Heart right ventricle (tissue), 16 donors: ENCODE measurements at regions of chr2 and their contacts with region 1.

Region 1: GRCh38 chr2:190679813-190680591 is 31.1 kb downstream of the NAB1 start:
- DNase-seq: peak in 1 of 2 donors; percentile 38
- ATAC-seq: peak in 6 of 8 donors; percentile 38 to 74 (median 56)
- H3K4me3 ChIP-seq: no peak overlapping the region
- H3K27ac ChIP-seq: no peak overlapping the region
- H3K4me1 ChIP-seq: peaks cover 0 to 96% (median 25%) of the 10 kb centered on the region in 9 donors
- H3K27me3 ChIP-seq: no peaks in the 10 kb centered on the region
- CTCF ChIP-seq: peak; percentile 15 to 64 (median 51)

Region 2: DNA sequence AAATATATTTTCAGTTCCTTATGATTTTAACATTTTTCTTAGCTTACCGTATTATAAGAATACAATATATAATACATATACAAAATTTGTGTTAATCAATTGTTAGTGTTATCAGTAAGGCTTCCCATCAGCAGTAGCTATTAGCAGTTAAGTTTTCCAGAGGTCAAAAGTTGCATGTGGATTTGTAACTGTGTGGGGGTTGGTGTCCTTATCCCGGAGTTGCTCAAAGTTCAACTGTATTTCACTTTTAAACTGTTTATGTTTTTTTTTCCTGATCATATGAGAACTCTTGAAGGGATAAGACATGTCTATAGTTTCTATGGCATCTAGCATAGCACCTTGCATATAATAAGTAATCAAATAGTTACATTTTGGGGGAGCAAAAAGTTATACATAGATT is 283.7 kb before region 1 on chr2:
- intact Hi-C with region 1: loop called in 2 of 10 experiments (anchors 10 kb)
- DNase-seq: no peak
- ATAC-seq: no peak
- H3K4me3 ChIP-seq: no peak overlapping the region
- H3K27ac ChIP-seq: no peak overlapping the region
- H3K4me1 ChIP-seq: no peaks in the 10 kb centered on the region
- H3K27me3 ChIP-seq: peaks cover 0 to 5% (median 0%) of the 10 kb centered on the region in 7 donors
- CTCF ChIP-seq: no peak

Region 3: DNA sequence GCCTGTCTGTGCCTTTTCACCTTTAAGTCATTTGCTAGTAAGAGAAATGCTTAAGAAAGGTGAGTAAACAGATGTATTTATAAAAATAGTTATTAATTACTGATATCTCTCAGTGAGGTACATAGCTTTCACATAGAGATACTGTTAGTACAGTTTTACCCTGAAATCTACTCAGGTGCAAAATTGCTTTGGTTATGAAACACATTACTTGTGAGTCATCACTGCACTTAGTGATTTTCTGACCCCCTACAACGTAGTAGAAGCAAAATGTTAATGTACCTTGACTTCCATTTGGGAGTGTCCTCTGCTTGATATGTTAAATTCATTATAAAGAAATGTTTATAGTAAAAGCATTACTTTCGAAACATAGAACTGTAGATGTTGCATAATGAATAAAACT is 207.1 kb after region 1 on chr2:
- intact Hi-C with region 1: no loop called
- DNase-seq: no peak
- ATAC-seq: no peak
- H3K4me3 ChIP-seq: no peak overlapping the region
- H3K27ac ChIP-seq: no peak overlapping the region
- H3K4me1 ChIP-seq: peaks cover 3 to 97% (median 89%) of the 10 kb centered on the region in 9 donors
- H3K27me3 ChIP-seq: no peaks in the 10 kb centered on the region
- CTCF ChIP-seq: no peak

Region 4: DNA sequence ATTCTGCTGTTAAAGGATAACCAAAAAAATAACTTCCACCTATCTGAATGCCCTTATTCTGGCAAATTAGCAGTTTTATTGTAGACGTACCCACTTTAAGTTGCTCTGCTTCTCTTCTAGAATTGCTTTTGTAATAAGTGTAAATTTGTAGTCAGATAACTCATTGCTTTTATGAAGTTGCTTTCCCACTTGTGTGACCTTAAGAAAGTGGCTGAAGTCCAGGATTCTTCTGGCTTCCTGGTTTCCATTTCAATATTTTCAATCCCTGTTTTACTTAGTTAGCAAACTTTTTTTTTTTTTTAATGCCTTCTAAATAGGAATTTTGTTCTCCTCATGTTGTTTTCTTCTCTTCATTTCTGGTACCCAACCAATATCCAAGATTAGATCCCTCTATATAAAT is 260.5 kb after region 1 on chr2:
- intact Hi-C with region 1: no loop called
- DNase-seq: peak in 1 of 2 donors; percentile 21
- ATAC-seq: peak in 1 of 8 donors; percentile 34
- H3K4me3 ChIP-seq: no peak overlapping the region
- H3K27ac ChIP-seq: peak overlapping the region in 1 of 10 donors; percentile 2
- H3K4me1 ChIP-seq: peaks cover 0 to 33% (median 25%) of the 10 kb centered on the region in 9 donors
- H3K27me3 ChIP-seq: no peaks in the 10 kb centered on the region
- CTCF ChIP-seq: no peak